Heart right ventricle (tissue), 16 donors: ENCODE measurements at regions of chr5 and their contacts with region 1.

Region 1: DNA sequence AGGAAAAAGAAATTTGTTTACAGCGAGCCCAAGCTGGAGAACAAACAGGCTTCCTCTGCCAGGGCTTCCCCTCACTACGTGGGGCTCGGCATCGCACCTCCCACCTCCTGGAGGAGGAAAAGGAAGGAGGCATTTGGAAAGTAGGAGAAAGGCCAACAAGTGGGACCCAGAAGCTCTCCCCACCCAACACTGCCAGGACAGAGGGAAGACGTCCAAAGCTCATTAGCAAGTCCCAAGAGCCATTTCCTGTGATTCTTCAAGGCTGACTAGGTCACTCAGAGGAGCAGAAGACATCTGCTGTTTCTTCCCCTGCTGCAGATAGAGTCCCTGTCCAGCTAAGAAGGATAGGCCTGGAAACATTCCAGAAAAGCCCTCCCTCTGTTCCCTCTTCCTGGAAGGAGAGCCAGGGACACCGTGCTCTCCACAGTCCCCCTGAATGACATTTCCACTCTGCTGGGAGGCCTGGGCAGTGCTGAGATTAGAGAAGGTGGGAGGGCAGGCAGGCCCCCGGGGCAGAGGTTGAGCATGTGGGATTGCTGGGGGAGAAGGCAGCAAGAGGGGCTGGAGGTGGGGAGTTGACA is 57.0 kb upstream of the NEURL1B start:
- DNase-seq: peak; percentile 72 to 85
- ATAC-seq: peak; percentile 70 to 91 (median 84)
- H3K4me3 ChIP-seq: no peak overlapping the region
- H3K27ac ChIP-seq: peak overlapping the region; percentile 81 to 96 (median 87)
- H3K4me1 ChIP-seq: peaks cover 24 to 86% (median 59%) of the 10 kb centered on the region in 9 donors
- H3K27me3 ChIP-seq: no peaks in the 10 kb centered on the region
- CTCF ChIP-seq: no peak

Region 2: GRCh38 chr5:172479044-172479783 is 104.8 kb before region 1 on chr5:
- intact Hi-C with region 1: loop called in 2 of 10 experiments (anchors 5 to 10 kb)
- DNase-seq: peak; percentile 83 to 92
- ATAC-seq: peak; percentile 94 to 98 (median 96)
- H3K4me3 ChIP-seq: peak overlapping the region in 5 of 10 donors; percentile 21 to 41 (median 28)
- H3K27ac ChIP-seq: peak overlapping the region; percentile 17 to 87 (median 78)
- H3K4me1 ChIP-seq: peaks cover 5 to 43% (median 15%) of the 10 kb centered on the region in 9 donors
- H3K27me3 ChIP-seq: no peaks in the 10 kb centered on the region
- CTCF ChIP-seq: peak; percentile 81 to 95 (median 86)

Region 3: GRCh38 chr5:172502969-172503368 is 81.1 kb before region 1 on chr5:
- intact Hi-C with region 1: loop called in 5 of 10 experiments (anchors 2 to 5 kb)
- DNase-seq: peak in 1 of 2 donors; percentile 5
- ATAC-seq: no peak
- H3K4me3 ChIP-seq: no peak overlapping the region
- H3K27ac ChIP-seq: peak overlapping the region; percentile 69 to 92 (median 86)
- H3K4me1 ChIP-seq: peaks cover 3 to 39% (median 22%) of the 10 kb centered on the region in 9 donors
- H3K27me3 ChIP-seq: no peaks in the 10 kb centered on the region
- CTCF ChIP-seq: no peak

Region 4: GRCh38 chr5:172640822-172641358 is 56.9 kb after region 1 on chr5 and contains the start of gene NEURL1B:
- intact Hi-C with region 1: loop called in 3 of 10 experiments (anchors 2 to 5 kb)
- DNase-seq: peak; percentile 81 to 87
- ATAC-seq: peak; percentile 74 to 93 (median 86)
- H3K4me3 ChIP-seq: peak within 1 kb of the TSS; percentile 72 to 99 (median 90)
- H3K27ac ChIP-seq: peak within 1 kb of the TSS; percentile 92 to 99 (median 98)
- H3K4me1 ChIP-seq: peaks cover 1 to 57% (median 35%) of the 10 kb centered on the region in 9 donors
- H3K27me3 ChIP-seq: peaks cover 0 to 30% (median 0%) of the 10 kb centered on the region in 7 donors
- CTCF ChIP-seq: peak in 4 of 9 donors; percentile 18 to 56 (median 48)
- total RNA-seq, gene NEURL1B: 14.4 to 45.8 (median 21.6) TPM

Region 5: DNA sequence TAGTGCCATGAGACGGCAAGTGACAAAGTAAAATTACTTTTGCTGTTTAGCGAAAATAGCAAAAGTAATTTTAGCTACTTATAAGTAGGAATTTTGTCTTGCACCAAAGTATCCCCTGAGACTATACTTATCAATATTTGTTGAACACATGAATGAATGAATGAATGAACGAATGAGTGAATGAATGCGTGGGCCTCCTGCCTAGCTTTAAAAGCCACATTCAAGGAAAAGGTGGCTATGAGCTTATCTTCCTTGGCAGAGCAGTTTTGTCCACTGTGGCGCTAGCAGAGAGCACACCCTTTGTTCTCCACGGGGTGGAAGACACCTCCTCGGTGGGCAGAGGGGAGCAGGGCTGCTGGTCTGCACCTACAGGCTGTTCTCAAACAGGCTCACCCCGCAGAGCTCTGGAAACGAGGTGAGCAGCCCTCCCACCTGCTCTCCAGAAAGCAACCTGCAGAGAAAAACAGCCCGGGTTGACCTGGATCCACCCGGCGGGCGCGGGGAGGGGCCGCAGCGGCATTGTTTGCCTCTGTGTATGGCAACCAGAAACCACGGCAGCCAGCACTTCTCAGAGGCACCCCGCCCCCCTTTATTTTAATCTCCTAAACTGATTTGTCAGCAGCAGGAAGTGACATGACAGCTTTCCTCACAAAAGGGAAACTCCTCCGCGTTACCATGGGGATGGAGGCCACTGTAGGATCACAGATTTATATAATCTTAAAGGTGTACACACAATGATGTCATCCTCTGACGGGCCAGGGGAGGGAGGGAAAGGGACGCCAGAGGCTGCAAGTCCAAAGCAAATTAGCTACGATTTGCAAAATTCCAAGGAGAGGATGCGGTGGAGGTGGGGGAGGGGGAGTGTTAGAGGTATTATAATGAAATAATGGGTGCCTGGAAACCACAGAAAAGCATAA is 181.1 kb after region 1 on chr5:
- intact Hi-C with region 1: loop called in 1 of 10 experiments (anchors 10 kb)
- DNase-seq: peak; percentile 90 to 100
- ATAC-seq: peak; percentile 64 to 82 (median 72)
- H3K4me3 ChIP-seq: peak overlapping the region in 9 of 10 donors; percentile 6 to 99 (median 93)
- H3K27ac ChIP-seq: peak overlapping the region; percentile 95 to 100 (median 100)
- H3K4me1 ChIP-seq: peaks cover 8 to 63% (median 37%) of the 10 kb centered on the region in 9 donors
- H3K27me3 ChIP-seq: no peaks in the 10 kb centered on the region
- CTCF ChIP-seq: no peak